Vagina (tissue), 2 donors: ENCODE measurements at regions of chr17 and their contacts with region 1.

Region 1: DNA sequence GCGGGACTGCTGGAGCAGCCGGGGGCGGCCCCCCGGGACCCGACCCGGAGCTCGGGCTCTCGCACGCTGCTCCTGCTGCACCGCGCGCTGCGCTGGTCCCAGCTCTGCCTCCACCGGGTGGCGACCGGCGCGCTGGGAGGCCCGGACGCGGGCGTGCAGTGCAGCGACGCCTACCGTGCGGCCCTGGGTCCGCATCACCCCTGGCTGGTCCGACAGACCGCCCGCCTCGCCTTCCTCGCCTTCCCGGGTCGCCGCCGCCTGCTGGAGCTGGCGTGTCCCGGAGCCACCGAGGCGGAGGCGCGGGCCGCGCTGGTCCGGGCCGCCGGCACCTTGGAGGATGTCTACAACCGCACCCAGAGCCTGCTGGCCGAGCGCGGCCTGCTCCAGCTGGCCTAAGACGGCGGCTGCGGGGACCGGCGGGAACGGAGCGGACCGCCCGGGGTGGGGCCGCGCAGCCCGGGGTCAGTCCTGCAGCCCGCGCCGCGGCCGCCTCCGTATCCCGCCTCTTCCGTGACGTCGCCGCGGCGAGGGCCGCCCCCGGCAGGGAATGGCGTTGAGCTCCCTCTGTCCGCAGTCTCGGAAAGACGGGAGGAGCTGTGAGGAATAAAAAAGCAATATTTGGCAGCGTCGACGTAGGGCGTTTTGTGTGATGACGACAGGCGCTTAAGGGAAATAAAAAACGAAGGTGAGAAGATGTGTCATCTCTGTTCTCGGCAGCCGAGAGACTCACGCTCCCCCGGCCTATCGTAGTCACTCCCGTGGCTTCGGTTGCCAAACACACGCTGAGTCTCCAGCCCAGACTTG is 1.3 kb downstream of the GLTPD2 start:
- DNase-seq: no peak
- H3K4me3 ChIP-seq: peak overlapping the region; percentile 60 to 80
- H3K27ac ChIP-seq: peak overlapping the region; percentile 88
- H3K4me1 ChIP-seq: peaks cover 44% of the 10 kb centered on the region
- H3K27me3 ChIP-seq: no peaks in the 10 kb centered on the region
- CTCF ChIP-seq: peak; percentile 18 to 71 (median 26)
- POLR2A ChIP-seq: peak in 1 of 2 donors; percentile 80

Region 2: DNA sequence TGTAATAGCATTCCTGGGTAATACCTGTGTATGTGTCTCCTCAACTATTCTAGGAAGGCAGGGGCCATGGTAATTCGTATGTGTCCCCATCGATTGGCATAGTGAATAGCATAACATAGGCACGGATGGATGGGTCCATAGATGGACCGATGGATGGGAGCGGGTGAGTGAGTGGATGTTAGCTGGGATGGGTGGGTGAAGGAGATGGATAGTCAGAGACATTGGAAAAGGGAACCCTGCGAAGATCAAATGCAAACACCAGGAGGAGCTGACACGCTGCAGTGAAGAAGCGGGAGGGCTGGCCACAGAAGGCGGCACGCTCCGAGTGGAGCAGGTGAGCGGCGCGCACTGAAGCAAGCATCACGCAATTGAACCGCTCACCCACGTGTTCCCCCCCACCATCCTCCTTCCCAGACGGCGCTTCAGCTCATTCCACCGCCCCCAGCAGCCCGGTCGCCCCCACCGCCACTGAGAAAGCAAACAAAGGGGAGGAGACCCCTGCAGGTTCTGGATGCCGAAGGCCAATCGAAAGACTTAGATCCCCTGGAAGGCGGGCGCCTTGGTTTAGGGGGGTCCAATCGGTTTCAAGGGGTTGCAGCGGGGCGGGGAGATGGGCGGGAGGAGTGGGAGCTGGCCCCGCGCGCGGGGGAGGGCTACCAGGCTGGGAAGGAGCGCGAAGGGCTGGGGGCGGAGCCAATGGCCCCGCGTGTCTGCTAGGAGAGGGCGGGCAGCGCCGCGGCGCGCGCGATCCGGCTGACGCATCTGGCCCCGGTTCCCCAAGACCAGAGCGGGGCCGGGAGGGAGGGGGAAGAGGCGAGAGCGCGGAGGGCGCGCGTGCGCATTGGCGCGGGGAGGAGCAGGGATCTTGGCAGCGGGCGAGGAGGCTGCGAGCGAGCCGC is 80.1 kb before region 1 on chr17 and contains the start of gene ARRB2:
- intact Hi-C with region 1: loop called (anchors 5 kb)
- DNase-seq: peak in 1 of 2 donors; percentile 97
- H3K4me3 ChIP-seq: peak within 1 kb of the TSS; percentile 74 to 91
- H3K27ac ChIP-seq: peak within 1 kb of the TSS; percentile 89
- H3K4me1 ChIP-seq: peaks cover 31% of the 10 kb centered on the region
- H3K27me3 ChIP-seq: no peaks in the 10 kb centered on the region
- CTCF ChIP-seq: peak; percentile 7 to 69 (median 54)
- POLR2A ChIP-seq: peak in 1 of 2 donors; percentile 18
- total RNA-seq, gene ARRB2: 28.0 TPM

Region 3: DNA sequence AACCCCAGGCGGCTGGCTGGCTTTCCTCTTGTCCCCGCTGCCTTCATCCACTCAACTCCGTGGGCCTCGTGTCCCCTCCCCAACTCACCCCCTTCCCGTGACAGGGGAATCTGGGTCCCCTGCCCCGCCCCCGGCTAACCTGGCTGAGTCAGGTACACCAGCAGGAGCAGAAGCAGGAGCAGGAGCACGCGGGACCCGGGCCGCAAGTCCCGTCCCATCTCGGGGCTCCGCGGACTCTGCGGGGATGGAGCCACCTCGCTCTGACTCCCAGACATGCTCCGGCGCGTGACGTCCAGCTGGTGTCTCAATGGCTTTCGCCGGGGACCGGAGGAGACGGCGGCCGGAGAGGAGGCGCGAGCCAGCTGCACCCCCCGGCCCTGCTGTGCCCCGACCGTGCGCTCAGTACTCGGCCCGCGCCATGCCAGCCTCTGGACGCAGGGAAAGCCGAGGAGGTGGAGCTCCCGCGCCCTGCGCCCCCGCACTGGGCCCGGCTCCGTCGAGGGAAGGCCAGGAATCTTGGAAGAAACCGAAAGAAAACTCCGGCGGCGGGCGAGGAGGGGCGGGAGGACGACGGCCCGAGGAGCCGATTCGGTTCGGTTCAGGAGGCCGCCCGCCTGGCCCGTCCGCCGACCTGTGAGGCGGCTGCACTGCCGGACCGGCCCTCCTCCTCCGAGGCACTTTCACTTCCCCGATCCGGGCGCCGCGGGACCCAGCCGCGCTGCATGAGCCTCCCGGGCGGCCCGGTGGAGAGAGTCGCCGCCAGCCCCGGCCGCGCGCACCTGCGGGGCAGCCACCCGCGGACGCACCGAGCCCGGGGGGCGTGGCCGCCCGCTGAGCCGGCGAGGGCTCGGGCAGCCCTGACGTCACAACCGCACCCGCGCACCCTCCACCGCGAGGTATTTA is 50.7 kb before region 1 on chr17 and contains the starts of genes CXCL16 and ZMYND15:
- intact Hi-C with region 1: loop called (anchors 10 kb)
- DNase-seq: no peak
- H3K4me3 ChIP-seq: peak within 1 kb of the TSS; percentile 62 to 65
- H3K27ac ChIP-seq: peak within 1 kb of the TSS; percentile 34
- H3K4me1 ChIP-seq: peaks cover 18% of the 10 kb centered on the region
- H3K27me3 ChIP-seq: no peaks in the 10 kb centered on the region
- CTCF ChIP-seq: no peak
- POLR2A ChIP-seq: peak in 1 of 2 donors; percentile 26
- total RNA-seq, gene CXCL16: 6.4 TPM
- total RNA-seq, gene ZMYND15: not detected

Region 4: DNA sequence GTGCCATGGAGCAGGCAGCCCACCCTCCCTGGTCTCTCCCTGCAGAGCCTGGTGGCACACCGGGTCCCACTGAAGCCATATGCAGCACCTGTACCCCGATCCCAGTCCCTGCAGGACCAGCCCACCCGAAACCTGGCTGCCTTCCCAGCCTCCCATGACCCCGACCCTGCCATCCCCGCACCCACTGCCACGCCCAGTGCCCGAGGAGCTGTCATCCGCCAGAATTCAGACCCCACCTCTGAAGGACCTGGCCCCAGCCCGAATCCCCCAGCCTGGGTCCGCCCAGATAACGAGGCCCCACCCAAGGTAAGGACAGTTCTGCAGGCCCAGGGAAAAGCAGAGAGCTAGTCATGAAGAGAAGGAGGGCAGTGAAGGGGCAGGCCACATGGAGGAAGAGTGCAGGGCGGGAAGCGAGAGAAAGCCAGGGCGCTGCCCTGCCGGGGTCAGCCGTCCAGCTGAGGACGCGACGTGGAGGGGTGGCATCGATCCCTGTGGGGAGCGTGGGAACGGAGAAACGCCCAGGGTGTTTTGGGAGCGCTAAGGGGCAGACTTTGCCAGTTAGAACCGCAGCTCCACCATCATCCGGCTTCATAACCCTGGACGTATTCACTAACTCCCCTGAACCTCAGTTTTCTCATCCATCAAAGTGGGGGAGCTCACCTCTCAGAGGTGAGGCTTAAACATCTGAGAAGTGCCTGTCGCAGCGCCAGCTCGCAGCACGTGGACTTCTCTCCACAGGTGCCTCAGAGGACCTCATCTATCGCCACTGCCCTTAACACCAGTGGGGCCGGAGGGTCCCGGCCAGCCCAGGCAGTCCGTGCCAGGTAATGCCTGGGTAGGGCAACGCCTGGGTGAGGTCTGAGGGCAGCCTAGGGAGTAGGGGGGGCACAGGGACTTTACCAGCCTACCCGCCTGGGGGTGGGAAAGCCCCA is 101.6 kb after region 1 on chr17:
- intact Hi-C with region 1: loop called (anchors 5 kb)
- DNase-seq: no peak
- H3K4me3 ChIP-seq: no peak overlapping the region
- H3K27ac ChIP-seq: no peak overlapping the region
- H3K4me1 ChIP-seq: no peaks in the 10 kb centered on the region
- H3K27me3 ChIP-seq: no peaks in the 10 kb centered on the region
- CTCF ChIP-seq: no peak
- POLR2A ChIP-seq: no peak